ENCODE measurements at regions of chr20 and their contacts with region 1.

Region 1: DNA sequence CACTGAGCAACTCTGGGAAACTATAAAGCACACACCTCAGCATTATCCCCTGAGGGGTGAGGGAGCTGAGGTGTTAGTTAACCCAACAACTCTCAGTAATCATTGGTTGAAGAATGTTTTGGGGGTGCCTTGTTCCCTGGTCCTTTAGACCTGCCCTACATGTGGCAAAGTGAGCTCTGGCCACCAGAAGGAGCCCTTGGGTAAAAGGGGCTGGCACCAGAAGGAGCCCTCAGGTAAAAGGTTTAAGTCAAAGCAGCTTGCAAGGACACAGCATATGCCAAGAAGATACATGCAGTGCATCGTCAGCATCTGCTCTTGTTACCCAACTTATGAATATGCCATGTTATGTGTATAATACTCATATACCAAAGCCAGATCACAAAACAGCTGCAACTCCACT is 1081.7 kb downstream of the KIF16B start:
- DNase-seq: peak; percentile 23
- H3K4me3 ChIP-seq: no peak overlapping the region
- H3K27ac ChIP-seq: no peak overlapping the region
- H3K4me1 ChIP-seq: peaks cover 6% of the 10 kb centered on the region
- H3K27me3 ChIP-seq: no peaks in the 10 kb centered on the region
- CTCF ChIP-seq: peak; percentile 43 to 71

Region 2: DNA sequence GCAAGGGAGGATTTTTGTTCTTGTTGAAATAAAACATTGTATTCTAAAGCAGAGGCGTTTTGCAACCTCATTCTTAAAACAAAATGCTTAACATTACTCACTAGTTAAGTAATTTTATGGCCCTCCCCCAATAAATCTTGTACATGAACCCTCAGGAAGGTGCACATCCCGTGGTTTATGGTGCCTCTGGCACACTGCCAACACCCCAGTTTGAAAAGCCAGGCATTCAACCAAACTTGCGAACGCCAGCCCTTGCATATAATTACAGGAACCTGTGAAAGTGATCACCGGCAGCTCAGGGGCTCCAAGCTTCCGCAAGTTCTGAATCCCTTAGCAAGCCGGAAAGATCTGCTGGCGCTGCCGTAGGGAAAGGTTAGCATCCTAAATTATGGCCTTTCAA is 45.2 kb before region 1 on chr20:
- CTCF ChIA-PET with region 1: no interaction called
- dilution Hi-C with region 1: no loop called
- in situ Hi-C with region 1: no loop called
- intact Hi-C with region 1: no loop called
- DNase-seq: peak; percentile 84
- H3K4me3 ChIP-seq: no peak overlapping the region
- H3K27ac ChIP-seq: peak overlapping the region; percentile 26
- H3K4me1 ChIP-seq: peaks cover 18% of the 10 kb centered on the region
- H3K27me3 ChIP-seq: no peaks in the 10 kb centered on the region
- CTCF ChIP-seq: no peak

Region 3: GRCh38 chr20:15654208-15654645 is 162.7 kb after region 1 on chr20:
- CTCF ChIA-PET with region 1: no interaction called
- dilution Hi-C with region 1: no loop called
- in situ Hi-C with region 1: no loop called
- intact Hi-C with region 1: loop called (anchors 10 kb)
- DNase-seq: peak; percentile 55
- H3K4me3 ChIP-seq: no peak overlapping the region
- H3K27ac ChIP-seq: no peak overlapping the region
- H3K4me1 ChIP-seq: no peaks in the 10 kb centered on the region
- H3K27me3 ChIP-seq: no peaks in the 10 kb centered on the region
- CTCF ChIP-seq: peak; percentile 67 to 75

Region 4: GRCh38 chr20:15759594-15759993 is 268.0 kb after region 1 on chr20:
- CTCF ChIA-PET with region 1: interaction called, 3 read pairs
- dilution Hi-C with region 1: no loop called
- in situ Hi-C with region 1: no loop called
- intact Hi-C with region 1: loop called (anchors 10 kb)
- DNase-seq: no peak
- H3K4me3 ChIP-seq: no peak overlapping the region
- H3K27ac ChIP-seq: no peak overlapping the region
- H3K4me1 ChIP-seq: no peaks in the 10 kb centered on the region
- H3K27me3 ChIP-seq: no peaks in the 10 kb centered on the region
- CTCF ChIP-seq: peak in 1 of 2 donors; percentile 18

Region 5: DNA sequence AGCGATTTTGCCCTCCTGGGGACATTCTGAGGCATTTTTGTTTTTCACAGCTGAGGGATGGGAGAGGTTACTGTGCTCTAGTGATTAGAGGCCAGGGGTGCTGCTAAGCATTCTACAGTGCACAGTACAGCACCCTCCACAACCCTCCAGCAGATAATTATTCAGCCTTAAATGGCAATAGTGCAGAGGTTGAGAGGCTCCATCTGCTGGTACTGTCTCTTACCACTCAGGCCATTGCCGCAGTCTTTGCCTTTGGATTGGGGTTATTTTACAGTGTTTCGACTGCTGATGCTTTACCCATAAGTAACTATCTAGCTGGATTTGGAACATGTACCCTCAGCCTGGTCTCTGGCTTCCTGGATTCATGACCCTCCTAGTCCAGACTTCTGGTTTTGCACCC is 376.3 kb after region 1 on chr20:
- CTCF ChIA-PET with region 1: no interaction called
- dilution Hi-C with region 1: no loop called
- in situ Hi-C with region 1: no loop called
- intact Hi-C with region 1: loop called (anchors 2 kb)
- DNase-seq: no peak
- H3K4me3 ChIP-seq: no peak overlapping the region
- H3K27ac ChIP-seq: no peak overlapping the region
- H3K4me1 ChIP-seq: no peaks in the 10 kb centered on the region
- H3K27me3 ChIP-seq: no peaks in the 10 kb centered on the region
- CTCF ChIP-seq: peak; percentile 25 to 57

Region 6: DNA sequence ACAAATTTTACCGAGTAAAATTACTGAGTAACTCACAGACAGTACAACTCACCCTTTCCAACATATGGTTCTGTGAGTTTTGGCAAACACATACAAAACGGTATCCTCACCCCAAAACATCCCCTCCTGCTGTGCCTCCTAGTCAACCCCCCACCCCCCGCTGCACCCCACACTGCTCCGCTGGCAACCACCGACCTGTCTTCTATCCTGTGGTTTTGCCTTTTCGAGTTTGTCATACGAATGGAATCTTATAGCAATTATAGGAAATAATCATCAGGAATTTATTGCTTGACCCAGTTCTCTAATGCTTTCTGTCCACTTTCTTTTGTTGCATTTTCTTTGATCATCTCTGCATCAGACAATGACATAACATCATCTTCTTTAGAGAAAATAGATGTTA is 769.3 kb after region 1 on chr20:
- CTCF ChIA-PET with region 1: no interaction called
- dilution Hi-C with region 1: loop called (anchors 10 kb)
- in situ Hi-C with region 1: no loop called
- intact Hi-C with region 1: no loop called
- DNase-seq: no peak
- H3K4me3 ChIP-seq: no peak overlapping the region
- H3K27ac ChIP-seq: no peak overlapping the region
- H3K4me1 ChIP-seq: no peaks in the 10 kb centered on the region
- H3K27me3 ChIP-seq: no peaks in the 10 kb centered on the region
- CTCF ChIP-seq: no peak